ENCODE measurements at regions of chr6 and their contacts with region 1.

Region 1: GRCh38 chr6:112043032-112044007 is 10.6 kb upstream of the CCN6 start:
- DNase-seq: peak; percentile 85
- H3K4me3 Mint-ChIP-seq: peak overlapping the region; percentile 91
- H3K27ac Mint-ChIP-seq: peak overlapping the region; percentile 98
- H3K4me1 Mint-ChIP-seq: peaks cover 32% of the 10 kb centered on the region
- H3K27me3 Mint-ChIP-seq: no peaks in the 10 kb centered on the region

Region 2: DNA sequence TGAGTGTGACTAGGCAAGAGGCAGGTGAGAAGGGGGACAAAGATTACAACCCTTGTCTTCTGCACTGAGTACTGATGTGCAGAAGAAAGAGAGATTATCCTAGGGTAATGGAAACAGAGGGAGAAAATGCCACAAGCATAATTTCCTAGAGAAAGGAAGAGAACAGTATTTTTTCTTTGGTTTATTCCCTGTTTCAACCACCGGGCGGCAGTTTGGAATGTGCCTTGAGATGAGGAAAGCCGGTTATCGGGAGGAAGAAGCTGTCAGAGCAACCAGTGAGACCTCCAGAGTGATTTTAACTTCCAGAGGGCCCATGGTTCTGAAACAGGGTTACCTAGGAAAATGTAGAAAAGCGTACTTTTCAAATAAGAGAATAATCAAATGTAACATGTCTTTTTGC is 681.7 kb before region 1 on chr6:
- intact Hi-C with region 1: no loop called
- DNase-seq: no peak
- H3K4me3 Mint-ChIP-seq: no peak overlapping the region
- H3K27ac Mint-ChIP-seq: no peak overlapping the region
- H3K4me1 Mint-ChIP-seq: no peaks in the 10 kb centered on the region
- H3K27me3 Mint-ChIP-seq: no peaks in the 10 kb centered on the region

Region 3: GRCh38 chr6:111483736-111484632 is 559.3 kb before region 1 on chr6:
- intact Hi-C with region 1: loop called (anchors 1 kb)
- DNase-seq: no peak
- H3K4me3 Mint-ChIP-seq: peak overlapping the region; percentile 91
- H3K27ac Mint-ChIP-seq: peak overlapping the region; percentile 96
- H3K4me1 Mint-ChIP-seq: peaks cover 50% of the 10 kb centered on the region
- H3K27me3 Mint-ChIP-seq: no peaks in the 10 kb centered on the region

Region 4: GRCh38 chr6:111764238-111765175 is 278.8 kb before region 1 on chr6:
- intact Hi-C with region 1: loop called (anchors 1 kb)
- DNase-seq: no peak
- H3K4me3 Mint-ChIP-seq: peak overlapping the region; percentile 53
- H3K27ac Mint-ChIP-seq: peak overlapping the region; percentile 93
- H3K4me1 Mint-ChIP-seq: peaks cover 95% of the 10 kb centered on the region
- H3K27me3 Mint-ChIP-seq: no peaks in the 10 kb centered on the region

Region 5: GRCh38 chr6:111873178-111874024 is 169.9 kb before region 1 on chr6 and contains the start of gene FYN:
- intact Hi-C with region 1: loop called (anchors 1 kb)
- DNase-seq: peak; percentile 98
- H3K4me3 Mint-ChIP-seq: peak within 1 kb of the TSS; percentile 97
- H3K27ac Mint-ChIP-seq: peak within 1 kb of the TSS; percentile 94
- H3K4me1 Mint-ChIP-seq: peaks cover 40% of the 10 kb centered on the region
- H3K27me3 Mint-ChIP-seq: peaks cover 2% of the 10 kb centered on the region
- total RNA-seq, gene FYN: 359 TPM in 2 replicates

Region 6: DNA sequence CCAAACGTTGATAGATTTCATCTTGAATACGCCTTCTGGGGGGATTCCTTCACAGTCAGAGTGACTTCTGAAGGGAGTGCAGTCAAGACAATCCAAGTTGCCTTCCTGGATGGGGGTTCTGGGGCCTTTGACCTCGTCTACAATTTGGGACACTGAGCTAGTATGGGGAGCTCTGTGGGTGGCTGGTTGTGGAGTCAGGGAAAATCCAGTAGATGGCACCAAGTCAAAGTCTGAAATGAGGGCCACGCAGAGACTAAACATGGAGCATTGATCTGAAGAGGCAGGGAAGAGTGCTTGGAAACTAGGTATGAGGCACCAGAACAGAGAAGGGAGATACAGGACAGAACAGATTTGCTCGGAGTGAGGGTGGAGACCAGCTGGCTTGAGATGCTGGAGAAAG is 33.0 kb before region 1 on chr6:
- intact Hi-C with region 1: loop called (anchors 1 kb)
- DNase-seq: no peak
- H3K4me3 Mint-ChIP-seq: no peak overlapping the region
- H3K27ac Mint-ChIP-seq: no peak overlapping the region
- H3K4me1 Mint-ChIP-seq: peaks cover 35% of the 10 kb centered on the region
- H3K27me3 Mint-ChIP-seq: no peaks in the 10 kb centered on the region

Region 7: DNA sequence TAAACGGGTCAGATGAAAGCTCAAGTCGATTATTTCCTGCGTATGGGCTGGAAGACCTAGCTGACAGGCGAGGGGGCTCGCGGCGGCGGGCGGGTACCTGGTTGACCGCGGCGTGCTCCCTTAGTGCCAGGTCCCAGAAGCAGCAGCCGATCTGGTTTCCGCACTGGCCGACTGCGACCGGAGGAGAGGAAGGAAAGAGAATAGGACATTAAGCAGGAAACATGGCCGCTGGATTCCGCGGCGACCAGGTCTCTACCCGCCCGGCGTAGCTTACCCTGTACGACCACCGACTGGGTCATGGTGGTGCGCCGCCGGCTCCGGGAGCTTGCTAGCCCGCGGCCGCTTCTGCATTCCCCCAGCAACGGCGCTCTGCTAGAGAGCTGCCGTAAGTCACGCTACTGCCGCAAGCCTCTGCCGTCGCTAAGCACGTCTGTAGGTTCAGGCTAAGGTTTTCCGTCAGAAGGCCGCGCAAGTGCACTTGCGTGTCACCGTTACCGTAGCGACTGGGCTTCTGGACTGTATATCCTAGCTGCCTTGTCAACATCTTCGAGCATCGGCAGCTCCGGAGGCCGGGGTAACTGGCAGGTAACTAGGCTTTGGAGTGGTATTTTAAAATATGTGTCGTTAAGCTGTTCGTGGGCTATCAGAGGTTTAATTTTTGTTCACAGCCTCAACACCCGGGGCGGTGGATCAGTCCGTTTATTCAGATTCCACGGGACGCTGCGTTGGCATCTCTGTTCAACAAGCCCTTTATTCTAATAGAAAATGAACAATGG is 44.0 kb after region 1 on chr6 and contains the starts of genes FAM229B and TUBE1:
- intact Hi-C with region 1: loop called (anchors 1 kb)
- DNase-seq: peak; percentile 87
- H3K4me3 Mint-ChIP-seq: no peak within 1 kb of the TSS
- H3K27ac Mint-ChIP-seq: no peak within 1 kb of the TSS
- H3K4me1 Mint-ChIP-seq: peaks cover 8% of the 10 kb centered on the region
- H3K27me3 Mint-ChIP-seq: peaks cover 24% of the 10 kb centered on the region
- total RNA-seq, gene FAM229B: 1.1 and 3.1 TPM in 2 replicates
- total RNA-seq, gene TUBE1: 21.0 and 24.3 TPM in 2 replicates